Activated B cell treated with CpG ODN at 0.5 μM for 24 hours (primary cell): ENCODE measurements at regions of chr1 and their contacts with region 1.

Region 1: DNA sequence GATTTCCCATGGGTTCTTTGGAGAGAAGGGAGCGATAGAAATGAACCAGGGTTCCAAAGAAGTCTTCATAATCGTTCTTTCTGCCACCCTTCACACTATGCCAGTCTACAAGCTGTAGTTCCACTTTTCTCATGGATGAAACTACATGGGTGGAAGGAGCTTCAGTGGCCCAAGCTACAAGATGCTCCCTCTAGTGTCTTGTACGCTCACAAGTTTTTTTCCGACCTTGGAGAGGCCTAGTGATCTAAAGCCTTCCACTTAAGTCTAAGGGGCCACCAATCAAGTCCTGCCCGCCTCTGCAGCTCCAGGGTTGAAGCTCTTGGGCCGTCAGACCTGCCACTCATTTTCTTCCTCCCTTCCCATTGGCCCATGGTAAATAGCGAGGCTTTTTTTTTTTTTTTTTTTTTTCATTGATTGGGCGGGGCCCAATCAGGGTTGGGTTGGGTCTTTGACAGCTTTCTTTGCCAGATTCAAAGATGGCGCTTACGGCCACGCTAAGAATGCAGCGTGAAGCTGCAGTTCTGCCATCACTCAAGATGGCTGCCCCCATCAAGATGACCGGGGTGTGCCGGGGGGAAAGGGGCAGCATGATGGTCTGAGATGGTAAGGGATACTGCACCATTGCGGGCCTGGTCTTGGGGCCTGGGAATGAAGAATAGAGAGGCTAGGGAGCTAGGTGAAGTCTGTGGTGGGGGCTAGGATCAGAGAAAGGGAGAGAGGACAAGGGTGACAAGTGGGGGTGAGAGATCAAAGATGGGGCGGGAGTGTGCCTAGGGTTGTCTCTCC is at the start of gene TOMM40L:
- DNase-seq: peak; percentile 65
- ATAC-seq: peak; percentile 95
- H3K4me3 Mint-ChIP-seq: peak within 1 kb of the TSS; percentile 99
- H3K27ac Mint-ChIP-seq: peak within 1 kb of the TSS; percentile 93
- H3K4me1 Mint-ChIP-seq: peaks cover 29% of the 10 kb centered on the region
- H3K27me3 Mint-ChIP-seq: peaks cover 25% of the 10 kb centered on the region
- CTCF ChIP-seq: no peak
- total RNA-seq, gene TOMM40L: 11.7 and 12.4 TPM in 2 replicates

Region 2: DNA sequence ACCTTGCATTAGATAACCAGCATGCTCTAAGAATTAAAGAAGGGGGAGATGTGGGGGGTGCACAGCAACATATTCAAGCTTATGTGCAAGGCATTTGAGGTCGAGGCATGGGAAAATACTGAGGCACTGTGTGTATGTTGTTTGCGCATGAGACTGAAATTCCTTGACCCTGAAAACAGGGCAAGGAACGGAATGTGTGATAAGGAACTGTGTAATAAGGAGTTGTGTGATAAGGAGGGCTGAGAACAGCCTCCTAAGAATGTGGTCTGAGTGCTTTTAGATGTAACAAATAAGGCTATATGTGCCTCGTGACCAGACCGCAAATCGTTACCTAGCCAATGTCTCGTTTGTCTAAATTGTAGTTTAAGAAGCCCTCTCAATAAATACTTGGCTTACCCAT is 314.3 kb before region 1 on chr1:
- CTCF ChIA-PET with region 1: no interaction called
- POLR2A ChIA-PET with region 1: no interaction called
- intact Hi-C with region 1: no loop called
- DNase-seq: no peak
- ATAC-seq: no peak
- H3K4me3 Mint-ChIP-seq: no peak overlapping the region
- H3K27ac Mint-ChIP-seq: no peak overlapping the region
- H3K4me1 Mint-ChIP-seq: no peaks in the 10 kb centered on the region
- H3K27me3 Mint-ChIP-seq: peaks cover 5% of the 10 kb centered on the region
- CTCF ChIP-seq: no peak

Region 3: GRCh38 chr1:161117759-161118581 is 107.8 kb before region 1 on chr1 and contains the starts of genes NIT1 and PFDN2:
- CTCF ChIA-PET with region 1: no interaction called
- POLR2A ChIA-PET with region 1: no interaction called
- intact Hi-C with region 1: no loop called
- DNase-seq: peak; percentile 84
- ATAC-seq: peak; percentile 77
- H3K4me3 Mint-ChIP-seq: peak within 1 kb of the TSS; percentile 92
- H3K27ac Mint-ChIP-seq: peak within 1 kb of the TSS; percentile 89
- H3K4me1 Mint-ChIP-seq: peaks cover 87% of the 10 kb centered on the region
- H3K27me3 Mint-ChIP-seq: no peaks in the 10 kb centered on the region
- CTCF ChIP-seq: no peak
- total RNA-seq, gene NIT1: 40.5 and 43.9 TPM in 2 replicates
- total RNA-seq, gene PFDN2: 43.8 and 67.9 TPM in 2 replicates

Region 4: DNA sequence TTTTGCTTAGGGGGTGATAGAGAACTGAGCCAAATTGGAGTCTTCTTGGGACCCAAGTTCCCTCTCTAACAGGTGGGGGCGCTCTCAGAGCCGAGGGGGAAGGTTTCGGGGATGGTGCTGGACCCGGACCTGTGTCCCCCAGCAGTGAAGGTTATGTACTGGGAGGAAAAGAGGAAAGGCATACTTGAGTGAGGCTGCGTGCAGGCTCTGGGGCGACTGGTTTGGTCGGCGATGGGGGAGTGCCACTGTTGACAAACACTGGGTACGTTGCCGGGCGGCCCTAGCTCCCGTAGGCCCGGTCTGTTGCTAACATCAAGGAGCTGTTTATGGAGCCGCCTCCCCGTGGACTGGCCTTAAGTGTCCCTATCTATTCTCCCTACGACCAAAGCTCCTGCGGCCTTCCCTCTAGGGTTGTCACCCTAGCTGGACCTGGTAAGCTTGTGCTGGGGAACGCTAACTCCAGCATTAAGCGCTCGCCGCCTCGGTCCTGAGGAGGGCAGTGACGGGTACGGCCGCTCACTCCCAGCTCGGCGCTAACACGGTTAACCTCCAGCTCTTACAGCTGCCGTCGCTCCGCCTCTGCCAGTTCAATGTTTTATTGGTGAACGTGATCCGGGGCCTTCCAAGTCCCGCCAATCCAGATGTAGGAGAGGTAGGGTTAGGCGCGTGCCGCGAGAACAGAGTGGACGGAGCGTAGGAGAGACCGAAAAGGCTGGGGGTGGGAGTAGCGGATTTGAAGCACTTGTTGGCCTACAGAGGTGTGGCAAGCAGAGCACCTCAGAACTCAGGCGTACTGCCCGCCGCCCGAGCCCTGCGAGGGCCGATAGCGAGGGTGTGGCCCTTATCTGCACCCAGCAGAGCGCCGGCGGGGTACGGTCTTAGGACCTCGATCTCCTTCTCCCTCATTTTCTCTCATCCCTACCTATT is 59.7 kb before region 1 on chr1 and contains the start of gene PPOX:
- CTCF ChIA-PET with region 1: interaction called, 20 read pairs
- POLR2A ChIA-PET with region 1: interaction called, 7 read pairs
- intact Hi-C with region 1: no loop called
- DNase-seq: peak; percentile 82
- ATAC-seq: peak; percentile 94
- H3K4me3 Mint-ChIP-seq: peak within 1 kb of the TSS; percentile 88
- H3K27ac Mint-ChIP-seq: peak within 1 kb of the TSS; percentile 98
- H3K4me1 Mint-ChIP-seq: peaks cover 48% of the 10 kb centered on the region
- H3K27me3 Mint-ChIP-seq: no peaks in the 10 kb centered on the region
- CTCF ChIP-seq: no peak
- total RNA-seq, gene PPOX: 31.5 and 40.7 TPM in 2 replicates

Region 5: DNA sequence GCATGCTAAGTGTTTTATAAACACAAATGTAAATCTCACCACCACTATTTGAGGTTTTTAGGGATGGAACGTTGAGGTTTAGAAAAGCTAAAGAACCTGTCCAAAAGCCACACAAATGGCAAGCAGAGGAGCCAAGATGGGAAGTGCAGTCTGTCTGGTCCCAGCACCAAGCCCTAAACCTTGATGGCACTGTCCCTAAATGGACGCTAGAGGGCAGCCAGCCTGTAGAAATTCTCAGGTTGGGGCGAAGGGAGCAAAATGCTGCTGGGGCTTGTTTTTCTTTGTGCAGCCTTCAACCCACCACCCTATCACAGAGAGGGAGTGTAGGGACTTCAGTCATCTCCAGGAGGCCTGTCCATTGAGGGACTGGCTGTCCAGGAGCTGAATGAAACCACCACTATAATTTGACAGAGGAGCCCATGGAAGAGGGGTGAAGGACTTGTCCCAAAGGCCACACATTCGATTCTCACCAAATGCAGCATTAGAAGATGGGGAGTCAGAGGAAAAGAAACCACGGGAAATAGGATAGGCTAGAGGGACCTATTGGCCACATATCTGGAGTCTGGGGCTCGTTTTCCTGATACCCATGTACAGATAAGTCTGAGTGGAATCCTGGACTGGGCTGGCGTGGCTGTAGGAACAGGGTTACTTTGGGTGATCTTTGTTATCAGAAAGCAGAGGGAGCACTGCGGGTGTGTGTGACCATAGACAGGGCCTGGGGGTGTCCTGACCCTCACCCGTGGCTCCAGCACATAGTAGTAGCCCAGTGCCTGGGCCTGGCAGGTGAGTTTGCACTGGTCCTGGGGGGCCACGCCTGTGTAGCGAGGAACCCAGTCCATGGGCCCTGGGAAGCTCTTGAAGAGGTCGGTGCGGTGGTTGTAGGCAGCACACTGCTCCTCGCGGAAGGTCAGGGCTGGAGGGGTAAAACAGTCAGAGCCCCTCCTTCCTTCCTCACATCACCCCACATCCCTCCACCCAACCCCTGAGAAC is 33.0 kb before region 1 on chr1:
- CTCF ChIA-PET with region 1: interaction called, 22 read pairs
- POLR2A ChIA-PET with region 1: interaction called, 4 read pairs
- intact Hi-C with region 1: loop called (anchors 1 kb)
- DNase-seq: no peak
- ATAC-seq: peak; percentile 93
- H3K4me3 Mint-ChIP-seq: no peak overlapping the region
- H3K27ac Mint-ChIP-seq: peak overlapping the region; percentile 68
- H3K4me1 Mint-ChIP-seq: peaks cover 52% of the 10 kb centered on the region
- H3K27me3 Mint-ChIP-seq: no peaks in the 10 kb centered on the region
- CTCF ChIP-seq: peak; percentile 56

Region 6: DNA sequence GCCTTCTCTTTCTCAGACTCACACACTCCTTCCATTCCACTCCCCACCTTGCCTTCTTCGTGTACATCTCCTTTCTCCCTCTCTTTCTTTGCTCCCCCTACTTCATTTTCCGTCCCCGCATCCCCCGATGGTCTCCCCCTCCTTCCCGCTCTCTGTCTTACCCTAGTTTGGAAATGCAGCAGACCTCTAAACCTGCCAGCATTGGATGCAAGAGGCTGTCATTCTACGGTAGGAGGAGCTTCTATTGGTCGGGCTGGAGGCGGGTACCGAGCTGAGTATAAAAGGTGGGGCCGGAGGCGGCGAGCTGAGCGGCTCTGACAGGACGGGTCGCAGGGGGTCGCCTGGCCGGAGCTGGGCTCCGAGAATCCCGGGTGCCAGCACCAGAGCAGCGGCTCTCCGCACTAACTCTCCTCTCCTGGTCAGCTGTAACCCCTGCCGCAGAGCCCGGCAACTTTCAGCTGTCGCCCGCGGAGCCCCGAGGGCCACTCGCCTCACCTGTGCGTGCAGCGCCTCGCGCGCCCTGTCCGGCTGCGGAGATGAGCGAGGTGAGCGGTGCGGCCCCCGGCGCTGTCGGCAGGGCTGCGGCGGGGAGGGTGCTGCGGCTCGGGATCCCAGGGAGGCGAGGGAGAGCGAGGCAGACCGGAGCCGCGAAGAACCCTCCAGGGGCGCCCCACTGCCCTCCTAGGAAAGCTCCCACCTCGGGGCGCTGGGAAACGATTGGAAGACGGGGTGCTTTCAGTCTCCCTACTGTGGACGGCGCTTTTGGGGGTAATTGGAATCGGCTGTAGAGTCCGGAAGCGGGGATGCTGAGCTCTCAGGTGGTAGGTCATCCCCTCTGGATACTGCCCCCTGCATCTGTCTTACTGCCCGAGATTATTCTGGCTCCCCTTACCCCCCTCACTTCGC is 33.0 kb after region 1 on chr1 and contains the start of gene PCP4L1:
- CTCF ChIA-PET with region 1: no interaction called
- POLR2A ChIA-PET with region 1: no interaction called
- intact Hi-C with region 1: no loop called
- DNase-seq: peak; percentile 26
- ATAC-seq: peak; percentile 86
- H3K4me3 Mint-ChIP-seq: peak within 1 kb of the TSS; percentile 73
- H3K27ac Mint-ChIP-seq: no peak within 1 kb of the TSS
- H3K4me1 Mint-ChIP-seq: peaks cover 30% of the 10 kb centered on the region
- H3K27me3 Mint-ChIP-seq: peaks cover 57% of the 10 kb centered on the region
- CTCF ChIP-seq: no peak
- total RNA-seq, gene PCP4L1: not detected in 2 replicates

Region 7: DNA sequence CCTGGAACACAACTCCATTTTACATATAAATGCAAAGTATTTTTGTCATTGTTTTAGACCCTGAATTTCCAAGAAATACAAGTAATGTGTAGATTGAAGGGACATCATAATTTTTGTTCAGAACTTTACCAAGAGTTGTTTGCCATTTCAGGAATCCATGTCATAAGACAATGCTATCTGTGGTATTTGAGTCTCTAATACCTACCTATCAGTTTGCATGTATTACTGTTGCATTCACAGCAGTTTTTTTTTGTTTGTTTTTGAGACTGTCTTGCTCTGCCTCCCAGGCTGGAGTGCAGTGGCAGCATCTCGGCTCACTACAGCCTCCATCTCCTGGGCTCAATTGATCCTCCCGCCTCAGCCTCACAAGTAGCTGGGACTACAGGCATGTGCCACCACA is 66.9 kb after region 1 on chr1:
- CTCF ChIA-PET with region 1: interaction called, 11 read pairs
- POLR2A ChIA-PET with region 1: no interaction called
- intact Hi-C with region 1: loop called (anchors 1 kb)
- DNase-seq: no peak
- ATAC-seq: no peak
- H3K4me3 Mint-ChIP-seq: no peak overlapping the region
- H3K27ac Mint-ChIP-seq: no peak overlapping the region
- H3K4me1 Mint-ChIP-seq: peaks cover 6% of the 10 kb centered on the region
- H3K27me3 Mint-ChIP-seq: no peaks in the 10 kb centered on the region
- CTCF ChIP-seq: no peak

Region 8: GRCh38 chr1:161367684-161368400 is 142.1 kb after region 1 on chr1 and contains the start of gene CFAP126:
- CTCF ChIA-PET with region 1: interaction called, 16 read pairs
- POLR2A ChIA-PET with region 1: no interaction called
- intact Hi-C with region 1: loop called (anchors 1 kb)
- DNase-seq: peak; percentile 35
- ATAC-seq: peak; percentile 100
- H3K4me3 Mint-ChIP-seq: peak within 1 kb of the TSS; percentile 17
- H3K27ac Mint-ChIP-seq: peak within 1 kb of the TSS; percentile 81
- H3K4me1 Mint-ChIP-seq: peaks cover 10% of the 10 kb centered on the region
- H3K27me3 Mint-ChIP-seq: no peaks in the 10 kb centered on the region
- CTCF ChIP-seq: no peak
- total RNA-seq, gene CFAP126: not detected in 2 replicates

Region 9: GRCh38 chr1:161486806-161487741 is 261.3 kb after region 1 on chr1:
- CTCF ChIA-PET with region 1: no interaction called
- POLR2A ChIA-PET with region 1: no interaction called
- intact Hi-C with region 1: no loop called
- DNase-seq: no peak
- ATAC-seq: peak; percentile 54
- H3K4me3 Mint-ChIP-seq: no peak overlapping the region
- H3K27ac Mint-ChIP-seq: peak overlapping the region; percentile 26
- H3K4me1 Mint-ChIP-seq: peaks cover 4% of the 10 kb centered on the region
- H3K27me3 Mint-ChIP-seq: peaks cover 35% of the 10 kb centered on the region
- CTCF ChIP-seq: no peak